PC-3 (cell line): ENCODE measurements at regions of chr10 and their contacts with region 1.

Region 1: GRCh38 chr10:35005868-35006267 is 84.3 kb downstream of the CUL2 start:
- DNase-seq: peak; percentile 100
- ATAC-seq: peak; percentile 81
- H3K4me3 ChIP-seq: no peak overlapping the region
- H3K27ac ChIP-seq: peak overlapping the region; percentile 82
- H3K4me1 ChIP-seq: peaks cover 52% of the 10 kb centered on the region
- H3K27me3 ChIP-seq: no peaks in the 10 kb centered on the region
- CTCF ChIP-seq: no peak

Region 2: GRCh38 chr10:34906067-34906965 is 99.6 kb before region 1 on chr10:
- CTCF ChIA-PET with region 1: no interaction called
- POLR2A ChIA-PET with region 1: no interaction called
- intact Hi-C with region 1: no loop called
- DNase-seq: no peak
- ATAC-seq: no peak
- H3K4me3 ChIP-seq: no peak overlapping the region
- H3K27ac ChIP-seq: no peak overlapping the region
- H3K4me1 ChIP-seq: peaks cover 4% of the 10 kb centered on the region; the same call in 1 of the 2 replicates
- H3K27me3 ChIP-seq: no peaks in the 10 kb centered on the region
- CTCF ChIP-seq: no peak

Region 3: DNA sequence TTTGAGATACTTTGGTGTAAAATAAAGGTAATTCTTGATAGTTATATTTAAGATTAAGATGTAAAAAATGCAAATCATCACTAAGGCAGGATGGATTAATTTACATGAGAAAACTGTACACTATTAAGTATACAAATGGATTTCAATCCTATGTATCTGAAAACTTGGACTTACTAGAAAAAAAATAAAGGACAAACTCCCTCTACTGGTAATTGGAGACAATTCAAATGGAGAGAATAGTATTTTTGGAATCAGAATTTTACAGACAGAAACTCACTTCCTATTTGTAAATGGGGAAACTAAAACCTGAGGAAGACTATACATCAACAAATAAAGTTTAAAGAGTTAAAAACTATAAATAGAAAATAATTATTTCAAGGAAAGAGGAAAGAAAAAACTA is 21.7 kb after region 1 on chr10:
- CTCF ChIA-PET with region 1: interaction called, 6 read pairs
- POLR2A ChIA-PET with region 1: interaction called, 5 read pairs
- intact Hi-C with region 1: loop called (anchors 1 kb)
- DNase-seq: peak; percentile 88
- ATAC-seq: peak; percentile 8; the same call in 1 of the 2 replicates
- H3K4me3 ChIP-seq: no peak overlapping the region
- H3K27ac ChIP-seq: no peak overlapping the region
- H3K4me1 ChIP-seq: peaks cover 16% of the 10 kb centered on the region
- H3K27me3 ChIP-seq: no peaks in the 10 kb centered on the region
- CTCF ChIP-seq: peak; percentile 96

Region 4: GRCh38 chr10:35058134-35058533 is 52.3 kb after region 1 on chr10:
- CTCF ChIA-PET with region 1: no interaction called
- POLR2A ChIA-PET with region 1: no interaction called
- intact Hi-C with region 1: loop called (anchors 1 kb)
- DNase-seq: peak; percentile 100
- ATAC-seq: peak; percentile 94
- H3K4me3 ChIP-seq: peak overlapping the region; percentile 16
- H3K27ac ChIP-seq: peak overlapping the region; percentile 77
- H3K4me1 ChIP-seq: peaks cover 43% of the 10 kb centered on the region
- H3K27me3 ChIP-seq: no peaks in the 10 kb centered on the region
- CTCF ChIP-seq: no peak

Region 5: GRCh38 chr10:35195361-35196306 is 189.8 kb after region 1 on chr10:
- CTCF ChIA-PET with region 1: interaction called, 15 read pairs
- POLR2A ChIA-PET with region 1: no interaction called
- intact Hi-C with region 1: loop called (anchors 5 kb)
- DNase-seq: peak; percentile 99
- ATAC-seq: peak; percentile 96
- H3K4me3 ChIP-seq: peak overlapping the region; percentile 60
- H3K27ac ChIP-seq: peak overlapping the region; percentile 78
- H3K4me1 ChIP-seq: peaks cover 17% of the 10 kb centered on the region
- H3K27me3 ChIP-seq: no peaks in the 10 kb centered on the region
- CTCF ChIP-seq: peak; percentile 100